Activated CD4-positive, alpha-beta T cell treated with anti-CD3 and anti-CD28 coated beads, Interleukin-2, amount 10 ng/mL, durations not matched to agents 24 days and 14 days (primary cell): ENCODE measurements at regions of chr2 and their contacts with region 1.

Region 1: DNA sequence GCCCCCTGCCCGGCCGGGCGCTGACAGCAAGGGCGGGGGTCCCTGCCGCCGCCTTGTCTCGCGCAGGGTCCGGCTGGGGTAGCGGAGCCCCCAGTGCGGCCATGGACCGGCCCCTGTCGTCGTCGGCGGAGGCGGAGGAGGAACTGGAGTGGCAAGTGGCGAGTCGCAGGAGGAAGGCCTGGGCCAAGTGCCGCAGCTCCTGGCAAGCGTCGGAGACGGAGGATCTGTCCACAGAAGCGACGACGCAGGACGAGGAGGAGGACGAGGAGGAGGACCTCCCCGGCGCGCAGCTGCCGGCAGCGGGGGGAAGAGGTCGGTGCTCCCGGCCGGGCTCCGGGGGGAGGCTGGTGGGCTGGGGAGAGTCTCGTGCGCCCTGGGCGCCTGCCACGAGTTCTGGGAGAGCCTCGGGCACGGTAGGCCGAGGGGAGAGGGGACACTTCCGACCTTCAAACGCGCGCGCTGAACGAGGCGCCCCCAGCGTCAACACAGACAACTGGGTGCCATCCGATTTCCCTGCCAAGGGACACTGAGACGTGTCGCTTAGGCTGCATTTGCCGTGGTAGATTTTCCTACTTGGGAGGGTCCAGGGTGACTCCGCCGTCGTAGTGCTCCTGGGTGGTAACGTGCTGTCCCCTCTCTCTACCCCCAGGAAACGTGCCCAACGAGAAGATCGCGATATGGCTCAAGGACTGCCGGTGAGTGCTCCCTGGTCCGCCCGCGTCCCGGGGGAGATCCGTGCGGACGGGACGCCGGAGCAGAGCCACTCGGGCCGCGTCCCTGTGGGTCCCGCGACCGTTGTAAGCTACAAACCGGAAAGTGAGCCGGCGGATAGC is 652 bp downstream of the ITPRID2 start:
- DNase-seq: peak; percentile 91
- H3K4me3 Mint-ChIP-seq: peak overlapping the region; percentile 100
- H3K27ac Mint-ChIP-seq: peak overlapping the region; percentile 97
- H3K4me1 Mint-ChIP-seq: peaks cover 29% of the 10 kb centered on the region
- H3K27me3 Mint-ChIP-seq: peaks cover 27% of the 10 kb centered on the region

Region 2: GRCh38 chr2:180980106-180980942 is 911.9 kb before region 1 on chr2 and contains the start of gene UBE2E3:
- intact Hi-C with region 1: loop called (anchors 2 kb)
- DNase-seq: peak; percentile 94
- H3K4me3 Mint-ChIP-seq: peak within 1 kb of the TSS; percentile 89
- H3K27ac Mint-ChIP-seq: peak within 1 kb of the TSS; percentile 97
- H3K4me1 Mint-ChIP-seq: peaks cover 34% of the 10 kb centered on the region
- H3K27me3 Mint-ChIP-seq: peaks cover 38% of the 10 kb centered on the region
- total RNA-seq, gene UBE2E3: 53.9 and 54.9 TPM in 2 replicates

Region 3: DNA sequence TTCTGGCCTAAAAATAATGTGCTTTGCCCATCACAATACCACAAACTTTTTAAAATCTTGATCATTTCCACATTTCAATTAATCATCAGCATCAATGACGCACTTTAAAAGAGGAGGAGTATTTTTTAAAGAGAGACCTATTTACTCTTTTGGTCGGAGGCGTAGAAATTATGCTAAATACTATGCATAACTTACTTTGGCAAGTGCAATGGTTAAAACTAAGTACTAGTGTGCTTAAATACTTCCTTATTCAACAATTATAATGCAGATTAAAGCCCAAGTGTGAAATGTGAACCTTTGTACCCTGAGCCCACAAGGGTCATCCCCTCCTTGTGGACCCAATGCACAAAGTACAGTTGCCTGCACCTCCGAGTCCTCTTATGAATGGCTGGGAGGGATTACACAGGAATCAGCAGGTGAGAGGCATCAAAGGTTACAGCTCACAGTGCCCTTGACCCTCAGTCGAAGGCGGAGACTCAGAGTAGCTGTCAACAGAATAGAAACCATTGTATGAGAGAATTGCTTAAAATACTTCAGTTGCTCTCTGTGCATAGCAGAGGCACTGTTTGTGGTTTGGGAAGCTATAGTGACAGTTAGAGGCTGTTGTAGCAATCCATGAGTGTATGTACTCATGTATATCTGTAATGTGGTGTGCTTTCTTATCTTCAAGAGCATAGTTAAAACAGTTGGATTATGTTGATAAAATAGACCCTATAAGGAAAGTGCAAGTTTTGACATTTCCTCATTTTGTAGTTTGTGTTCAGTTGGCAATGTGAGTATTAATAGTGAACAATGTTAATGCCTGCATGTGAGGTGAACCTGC is 586.7 kb before region 1 on chr2:
- intact Hi-C with region 1: loop called (anchors 5 kb)
- DNase-seq: peak; percentile 91
- H3K4me3 Mint-ChIP-seq: peak overlapping the region; percentile 66
- H3K27ac Mint-ChIP-seq: peak overlapping the region; percentile 89
- H3K4me1 Mint-ChIP-seq: peaks cover 65% of the 10 kb centered on the region
- H3K27me3 Mint-ChIP-seq: no peaks in the 10 kb centered on the region

Region 4: DNA sequence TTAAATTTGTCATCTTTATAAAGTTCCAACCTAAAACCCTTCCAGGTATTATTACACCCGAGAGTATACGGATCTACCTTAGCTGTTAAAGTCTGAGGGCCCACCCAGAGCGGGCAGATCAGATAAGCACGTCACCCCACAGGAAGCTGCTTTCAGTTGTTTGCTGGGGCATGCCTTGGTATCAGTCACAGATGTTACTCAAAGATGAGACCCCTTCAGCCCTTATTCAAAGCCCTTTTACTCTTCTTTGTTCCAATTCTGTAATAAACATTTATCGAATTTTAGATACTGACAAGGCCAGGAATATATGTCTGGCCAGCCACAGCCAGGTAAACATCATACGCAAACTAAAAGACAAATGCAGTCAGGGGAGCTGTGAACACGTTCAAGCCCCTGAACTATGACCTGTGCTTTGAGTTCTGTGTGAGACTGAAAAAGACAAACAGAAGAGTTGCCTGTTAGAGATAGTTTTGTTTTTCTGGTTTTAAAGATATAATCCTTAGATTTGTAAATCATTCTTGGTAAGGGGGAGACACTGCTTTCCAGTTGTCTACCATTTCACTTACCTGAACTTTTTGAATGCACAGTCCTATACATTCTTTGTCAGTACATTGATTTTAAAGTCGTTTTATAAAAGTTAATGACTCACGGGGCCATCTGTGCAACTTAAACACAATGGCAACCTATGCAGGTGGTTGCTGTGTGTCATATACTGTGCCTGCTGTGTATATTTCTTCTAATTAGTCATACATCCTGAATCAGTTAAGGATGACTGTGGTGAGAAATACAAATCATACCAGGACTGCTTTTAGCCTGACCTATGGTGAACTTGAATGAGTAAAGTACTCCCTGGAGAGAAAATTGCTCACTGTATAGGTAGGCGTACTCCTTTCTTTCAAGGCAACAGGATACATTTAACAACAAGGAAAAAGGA is 101.2 kb before region 1 on chr2:
- intact Hi-C with region 1: loop called (anchors 1 kb)
- DNase-seq: peak; percentile 62
- H3K4me3 Mint-ChIP-seq: peak overlapping the region; percentile 28
- H3K27ac Mint-ChIP-seq: peak overlapping the region; percentile 79
- H3K4me1 Mint-ChIP-seq: peaks cover 25% of the 10 kb centered on the region
- H3K27me3 Mint-ChIP-seq: no peaks in the 10 kb centered on the region

Region 5: GRCh38 chr2:181953881-181954537 is 61.8 kb after region 1 on chr2:
- intact Hi-C with region 1: loop called (anchors 5 kb)
- DNase-seq: peak; percentile 88
- H3K4me3 Mint-ChIP-seq: peak overlapping the region; percentile 74
- H3K27ac Mint-ChIP-seq: no peak overlapping the region
- H3K4me1 Mint-ChIP-seq: peaks cover 19% of the 10 kb centered on the region
- H3K27me3 Mint-ChIP-seq: peaks cover 29% of the 10 kb centered on the region